Endothelial cell of umbilical vein (primary cell): ENCODE measurements at regions of chr22 and their contacts with region 1.

Region 1: GRCh38 chr22:25777870-25778269 is 35.9 kb downstream of the MYO18B start:
- DNase-seq: peak; percentile 44
- H3K4me3 ChIP-seq: no peak overlapping the region
- H3K27ac ChIP-seq: no peak overlapping the region
- H3K4me1 ChIP-seq: no peaks in the 10 kb centered on the region
- H3K27me3 ChIP-seq: no peaks in the 10 kb centered on the region
- CTCF ChIP-seq: peak in 1 of 2 donors; percentile 33
- POLR2A ChIP-seq: no peak

Region 2: DNA sequence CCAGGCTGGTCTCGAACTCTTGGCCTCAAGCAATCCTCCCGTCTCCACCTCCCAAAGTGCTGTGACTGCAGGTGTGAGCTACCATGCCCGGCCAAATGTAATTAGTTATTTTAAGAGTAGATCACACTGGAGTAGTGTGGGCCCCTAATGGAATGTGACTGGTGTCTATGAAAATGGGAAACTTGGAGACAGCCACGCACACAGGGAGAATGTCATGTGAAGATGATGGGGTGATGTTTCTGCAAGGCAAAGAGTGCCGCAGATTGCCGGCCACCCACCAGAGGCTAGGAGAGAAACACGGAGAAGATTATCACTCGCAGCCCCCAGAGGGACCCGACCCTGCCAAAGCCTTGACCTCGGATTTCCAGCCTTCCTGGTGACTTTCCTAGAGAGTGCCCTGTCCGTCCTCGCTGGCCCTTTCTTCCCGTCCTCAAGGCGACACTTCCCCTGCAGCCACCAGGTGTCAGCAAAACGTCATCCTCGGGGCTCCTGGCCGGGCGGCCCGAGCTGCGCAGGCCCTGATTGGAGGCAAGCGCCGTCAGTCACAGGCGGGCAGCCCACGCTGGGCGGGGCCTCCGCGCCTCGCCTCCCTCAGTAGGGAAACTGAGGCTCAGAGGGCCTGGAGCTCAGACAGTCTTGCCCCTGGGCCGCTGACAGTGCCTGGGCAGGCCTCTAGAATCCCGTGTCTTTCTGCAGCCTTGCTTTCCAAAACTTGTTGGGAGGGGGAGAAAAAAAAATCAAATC is 542.2 kb before region 1 on chr22:
- CTCF ChIA-PET with region 1: interaction called, 5 read pairs
- POLR2A ChIA-PET with region 1: no interaction called
- dilution Hi-C with region 1: no loop called
- intact Hi-C with region 1: loop called (anchors 5 kb)
- DNase-seq: peak; percentile 73
- H3K4me3 ChIP-seq: no peak overlapping the region
- H3K27ac ChIP-seq: no peak overlapping the region
- H3K4me1 ChIP-seq: peaks cover 3% of the 10 kb centered on the region
- H3K27me3 ChIP-seq: peaks cover 0 to 3% of the 10 kb centered on the region in 2 experiments
- CTCF ChIP-seq: peak; percentile 70 to 77
- POLR2A ChIP-seq: no peak

Region 3: DNA sequence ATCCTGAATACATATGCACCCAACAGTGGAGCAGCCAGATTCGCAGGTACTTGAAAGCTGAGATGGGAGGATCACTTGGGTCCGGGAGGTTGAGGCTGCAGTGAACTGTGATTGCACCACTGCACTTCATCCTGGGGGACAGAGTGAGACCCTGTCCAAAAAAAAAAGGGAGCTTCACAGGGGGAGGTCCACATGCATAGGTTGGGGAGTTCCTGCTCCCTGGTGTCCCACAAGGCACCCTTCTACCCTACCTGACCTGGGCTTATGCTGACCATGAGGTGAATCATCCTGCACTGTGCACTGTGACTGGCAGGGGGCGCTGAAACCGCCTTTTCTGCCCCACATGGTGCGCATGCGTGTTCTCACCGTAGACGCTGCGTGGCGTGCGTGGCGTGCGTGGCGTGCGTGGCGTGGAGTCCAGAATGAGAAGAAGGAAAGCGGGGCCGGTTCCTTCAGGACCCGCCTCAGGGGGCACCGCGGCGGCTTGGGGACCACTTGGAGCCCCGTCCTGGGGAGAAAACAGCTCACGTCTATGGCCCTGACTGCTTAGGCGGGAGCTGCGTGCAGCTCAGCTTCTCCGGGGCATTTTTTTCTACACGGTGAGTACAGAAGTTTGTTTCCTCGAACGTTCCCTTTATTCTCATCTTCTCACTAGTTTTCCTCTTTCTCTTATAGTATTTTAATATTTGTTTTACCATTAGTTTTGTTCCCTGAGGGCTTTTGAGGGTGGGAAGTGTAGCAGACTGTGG is 330.0 kb before region 1 on chr22:
- CTCF ChIA-PET with region 1: interaction called, 9 read pairs
- POLR2A ChIA-PET with region 1: no interaction called
- dilution Hi-C with region 1: no loop called
- intact Hi-C with region 1: loop called (anchors 5 kb)
- DNase-seq: peak; percentile 92
- H3K4me3 ChIP-seq: peak overlapping the region; percentile 77 to 97 (median 95)
- H3K27ac ChIP-seq: peak overlapping the region; percentile 62
- H3K4me1 ChIP-seq: peaks cover 17% of the 10 kb centered on the region
- H3K27me3 ChIP-seq: no peaks in the 10 kb centered on the region
- CTCF ChIP-seq: peak; percentile 92 to 93
- POLR2A ChIP-seq: peak; percentile 78

Region 4: DNA sequence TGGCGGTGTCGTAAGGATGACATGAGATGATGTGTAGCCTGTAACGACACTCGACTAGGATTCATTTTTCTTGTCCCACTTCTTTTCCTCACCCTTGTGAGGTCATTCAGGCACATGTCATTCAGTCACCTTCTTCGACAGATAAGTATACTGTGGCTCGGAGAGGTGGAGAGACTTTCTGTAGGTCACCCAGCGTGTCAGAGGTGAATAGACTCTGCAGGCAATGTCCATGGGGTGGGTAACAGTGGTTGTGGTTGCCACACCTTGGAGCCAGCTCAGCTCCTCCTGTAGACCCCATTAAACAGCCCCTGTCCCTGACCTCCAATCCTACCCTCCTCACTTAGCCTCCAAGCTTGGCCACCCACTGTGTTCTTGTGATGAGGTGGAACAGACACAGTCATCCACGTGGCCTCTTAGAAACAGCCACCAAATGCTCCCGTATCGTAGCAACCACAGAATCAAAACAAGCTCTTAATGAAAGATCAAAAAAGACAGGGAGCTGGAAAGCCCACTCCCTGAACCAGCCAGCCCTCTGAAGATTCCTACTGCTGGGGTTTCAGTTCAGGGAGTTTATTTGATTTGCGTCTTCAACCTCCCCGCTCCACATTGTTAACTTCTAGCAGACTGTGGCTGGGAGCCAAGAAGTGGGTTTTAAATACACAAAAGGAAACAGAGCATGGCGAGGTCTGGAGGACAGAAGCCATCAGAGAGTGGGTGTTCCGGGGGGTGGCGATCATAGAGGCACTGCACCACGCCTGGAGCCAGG is 302.4 kb before region 1 on chr22:
- CTCF ChIA-PET with region 1: interaction called, 12 read pairs
- POLR2A ChIA-PET with region 1: no interaction called
- dilution Hi-C with region 1: no loop called
- intact Hi-C with region 1: loop called (anchors 5 kb)
- DNase-seq: peak; percentile 89
- H3K4me3 ChIP-seq: no peak overlapping the region
- H3K27ac ChIP-seq: peak overlapping the region; percentile 23
- H3K4me1 ChIP-seq: peaks cover 10% of the 10 kb centered on the region
- H3K27me3 ChIP-seq: no peaks in the 10 kb centered on the region
- CTCF ChIP-seq: no peak
- POLR2A ChIP-seq: no peak

Region 5: DNA sequence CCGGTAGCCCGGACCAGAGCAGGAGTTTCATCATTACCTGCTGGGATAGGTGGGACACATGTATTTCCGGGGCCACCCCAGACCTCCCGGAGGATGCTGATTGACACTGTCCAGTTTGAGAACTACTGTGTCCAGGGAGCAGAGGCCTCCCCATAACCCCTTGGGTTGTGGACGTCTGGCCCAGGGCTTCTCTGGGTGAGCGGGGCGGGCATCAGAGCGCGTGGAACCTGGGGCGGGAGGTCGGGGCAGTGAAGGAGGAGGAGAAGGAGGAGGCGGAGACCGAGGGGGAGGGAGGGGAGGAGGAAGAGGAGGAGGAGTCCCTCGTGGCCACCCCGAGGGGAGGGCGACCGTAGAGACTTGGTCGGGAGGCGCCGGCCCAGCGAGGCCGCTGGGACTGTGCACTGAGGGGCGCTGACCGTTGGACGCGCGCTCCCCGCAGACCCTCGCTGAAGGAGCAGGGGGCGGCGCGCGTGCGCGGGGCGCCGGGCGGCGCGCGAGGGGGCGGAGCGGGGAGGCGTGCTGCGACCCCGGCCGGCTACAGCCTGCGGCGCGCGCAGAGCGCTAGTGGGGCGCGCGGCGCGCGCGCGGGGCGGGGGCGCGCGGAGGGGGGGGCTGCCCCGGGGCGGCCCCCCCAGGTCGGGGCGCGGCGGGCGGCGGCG is 213.4 kb before region 1 on chr22 and contains the start of gene GRK3:
- CTCF ChIA-PET with region 1: interaction called, 6 read pairs
- POLR2A ChIA-PET with region 1: no interaction called
- dilution Hi-C with region 1: no loop called
- intact Hi-C with region 1: loop called (anchors 5 kb)
- DNase-seq: peak; percentile 37
- H3K4me3 ChIP-seq: peak within 1 kb of the TSS; percentile 30 to 67 (median 43)
- H3K27ac ChIP-seq: no peak within 1 kb of the TSS
- H3K4me1 ChIP-seq: peaks cover 6% of the 10 kb centered on the region
- H3K27me3 ChIP-seq: peaks cover 8 to 17% of the 10 kb centered on the region in 2 experiments
- CTCF ChIP-seq: no peak
- POLR2A ChIP-seq: no peak
- total RNA-seq, gene GRK3: 3.0 and 4.4 TPM in 2 replicates

Region 6: GRCh38 chr22:25759825-25760231 is 18.0 kb before region 1 on chr22:
- CTCF ChIA-PET with region 1: interaction called, 39 read pairs
- POLR2A ChIA-PET with region 1: no interaction called
- dilution Hi-C with region 1: no loop called
- intact Hi-C with region 1: no loop called
- DNase-seq: peak; percentile 97
- H3K4me3 ChIP-seq: no peak overlapping the region
- H3K27ac ChIP-seq: peak overlapping the region; percentile 77
- H3K4me1 ChIP-seq: peaks cover 19% of the 10 kb centered on the region
- H3K27me3 ChIP-seq: no peaks in the 10 kb centered on the region
- CTCF ChIP-seq: no peak
- POLR2A ChIP-seq: no peak